Activated B cell treated with CpG ODN at 0.5 μM for 24 hours (primary cell): ENCODE measurements at regions of chr11 and their contacts with region 1.

Region 1: DNA sequence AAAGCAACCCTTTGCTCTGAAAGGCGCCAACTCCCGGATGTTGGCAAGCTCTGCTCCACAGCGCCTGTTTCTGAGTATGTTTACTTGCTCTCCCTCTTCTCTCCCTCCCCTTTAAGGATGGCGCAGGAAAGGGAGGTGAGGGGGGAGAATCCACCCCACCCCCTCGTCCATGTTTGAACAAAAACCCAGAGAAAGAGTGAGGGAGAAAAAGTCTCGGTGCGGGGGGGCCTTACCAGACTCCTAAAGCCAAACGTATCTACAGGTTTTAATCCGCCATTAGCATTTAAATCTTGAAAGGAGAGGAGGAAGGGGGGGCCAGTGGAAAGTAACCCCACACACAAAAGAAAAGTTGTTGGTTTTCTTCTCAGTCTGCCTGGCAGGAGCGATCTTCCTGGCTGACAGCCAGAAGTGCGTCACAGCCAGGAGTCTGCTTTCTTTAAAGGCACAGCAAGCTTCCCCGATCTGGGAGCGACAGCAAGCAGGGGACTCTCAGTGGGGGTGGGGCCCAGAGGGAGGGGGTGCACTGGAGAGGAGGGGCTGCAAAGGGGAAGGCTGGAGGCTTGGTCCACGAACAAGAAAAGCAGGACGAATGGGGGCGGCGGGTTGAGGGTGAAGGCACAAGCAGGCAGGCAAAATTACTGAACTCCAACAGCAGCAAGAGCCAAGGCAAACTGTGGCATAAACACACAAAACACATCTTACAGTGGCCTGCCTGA is 39.5 kb downstream of the NUMA1 start:
- DNase-seq: peak; percentile 49
- ATAC-seq: peak; percentile 48
- H3K4me3 Mint-ChIP-seq: no peak overlapping the region
- H3K27ac Mint-ChIP-seq: no peak overlapping the region
- H3K4me1 Mint-ChIP-seq: peaks cover 2% of the 10 kb centered on the region
- H3K27me3 Mint-ChIP-seq: no peaks in the 10 kb centered on the region
- CTCF ChIP-seq: no peak

Region 2: GRCh38 chr11:71500601-71501021 is 540.3 kb before region 1 on chr11:
- CTCF ChIA-PET with region 1: no interaction called
- POLR2A ChIA-PET with region 1: no interaction called
- intact Hi-C with region 1: no loop called
- DNase-seq: no peak
- ATAC-seq: no peak
- H3K4me3 Mint-ChIP-seq: no peak overlapping the region
- H3K27ac Mint-ChIP-seq: no peak overlapping the region
- H3K4me1 Mint-ChIP-seq: peaks cover 1% of the 10 kb centered on the region
- H3K27me3 Mint-ChIP-seq: no peaks in the 10 kb centered on the region
- CTCF ChIP-seq: no peak

Region 3: DNA sequence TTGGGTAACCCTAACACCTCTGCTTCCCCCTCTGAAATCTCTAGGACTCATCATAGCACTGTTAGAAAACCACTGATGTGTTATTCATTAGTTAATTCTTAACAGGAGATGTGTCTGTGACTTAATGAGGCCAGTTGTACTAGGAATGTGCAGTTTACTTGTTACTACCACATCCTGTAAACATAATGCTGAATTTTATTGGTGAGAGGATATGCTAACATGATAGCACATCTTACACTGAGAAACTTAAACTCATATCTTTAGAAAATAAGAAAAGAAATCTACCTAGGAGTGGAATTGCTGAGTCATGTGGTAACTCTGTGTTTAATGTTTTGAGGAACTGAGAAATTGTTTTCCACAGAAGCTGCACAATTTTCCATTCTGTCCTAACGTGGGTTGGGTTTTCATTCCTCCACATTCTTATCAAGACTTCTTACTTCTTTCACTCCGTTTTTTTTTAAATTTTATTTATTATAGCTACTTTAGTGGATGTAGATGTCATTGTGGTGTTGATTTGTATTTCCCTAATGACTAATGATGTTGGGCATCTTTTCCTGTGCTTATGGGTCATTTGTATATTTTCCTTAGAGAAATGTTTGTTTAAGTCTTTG is 78.4 kb before region 1 on chr11:
- CTCF ChIA-PET with region 1: no interaction called
- POLR2A ChIA-PET with region 1: no interaction called
- intact Hi-C with region 1: no loop called
- DNase-seq: no peak
- ATAC-seq: peak; percentile 77
- H3K4me3 Mint-ChIP-seq: no peak overlapping the region
- H3K27ac Mint-ChIP-seq: peak overlapping the region; percentile 75
- H3K4me1 Mint-ChIP-seq: peaks cover 19% of the 10 kb centered on the region
- H3K27me3 Mint-ChIP-seq: no peaks in the 10 kb centered on the region
- CTCF ChIP-seq: no peak

Region 4: DNA sequence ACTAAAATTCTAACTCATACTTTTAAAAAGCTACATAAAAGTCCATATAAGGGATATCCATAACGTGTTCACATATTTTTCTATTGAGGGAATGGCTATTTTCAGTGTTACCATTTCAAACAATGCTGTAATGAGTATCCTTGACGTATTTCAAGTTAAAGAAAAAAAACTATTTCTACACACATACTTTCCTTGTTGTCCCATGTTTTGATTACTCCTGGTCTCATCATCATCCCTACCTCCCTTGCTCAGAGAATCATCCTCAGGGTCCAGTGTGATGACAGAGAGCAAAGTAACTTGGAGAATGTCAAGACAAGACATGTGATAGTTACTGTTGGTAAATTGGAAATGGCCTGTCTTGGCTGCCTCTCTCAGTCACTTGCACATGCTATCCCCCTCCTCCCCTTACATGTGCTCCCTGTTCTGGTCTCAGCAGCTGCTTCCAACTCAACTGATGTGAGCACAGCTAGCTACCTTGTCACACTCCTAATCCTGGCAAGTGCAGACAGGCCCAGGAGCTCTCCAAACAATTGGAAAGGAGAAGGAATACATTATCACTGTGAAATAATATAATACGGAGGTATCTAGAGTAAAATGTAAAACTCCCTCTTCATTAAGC is 17.6 kb after region 1 on chr11:
- CTCF ChIA-PET with region 1: no interaction called
- POLR2A ChIA-PET with region 1: interaction called, 3 read pairs
- intact Hi-C with region 1: loop called (anchors 2 kb)
- DNase-seq: no peak
- ATAC-seq: no peak
- H3K4me3 Mint-ChIP-seq: no peak overlapping the region
- H3K27ac Mint-ChIP-seq: no peak overlapping the region
- H3K4me1 Mint-ChIP-seq: peaks cover 7% of the 10 kb centered on the region
- H3K27me3 Mint-ChIP-seq: no peaks in the 10 kb centered on the region
- CTCF ChIP-seq: no peak

Region 5: DNA sequence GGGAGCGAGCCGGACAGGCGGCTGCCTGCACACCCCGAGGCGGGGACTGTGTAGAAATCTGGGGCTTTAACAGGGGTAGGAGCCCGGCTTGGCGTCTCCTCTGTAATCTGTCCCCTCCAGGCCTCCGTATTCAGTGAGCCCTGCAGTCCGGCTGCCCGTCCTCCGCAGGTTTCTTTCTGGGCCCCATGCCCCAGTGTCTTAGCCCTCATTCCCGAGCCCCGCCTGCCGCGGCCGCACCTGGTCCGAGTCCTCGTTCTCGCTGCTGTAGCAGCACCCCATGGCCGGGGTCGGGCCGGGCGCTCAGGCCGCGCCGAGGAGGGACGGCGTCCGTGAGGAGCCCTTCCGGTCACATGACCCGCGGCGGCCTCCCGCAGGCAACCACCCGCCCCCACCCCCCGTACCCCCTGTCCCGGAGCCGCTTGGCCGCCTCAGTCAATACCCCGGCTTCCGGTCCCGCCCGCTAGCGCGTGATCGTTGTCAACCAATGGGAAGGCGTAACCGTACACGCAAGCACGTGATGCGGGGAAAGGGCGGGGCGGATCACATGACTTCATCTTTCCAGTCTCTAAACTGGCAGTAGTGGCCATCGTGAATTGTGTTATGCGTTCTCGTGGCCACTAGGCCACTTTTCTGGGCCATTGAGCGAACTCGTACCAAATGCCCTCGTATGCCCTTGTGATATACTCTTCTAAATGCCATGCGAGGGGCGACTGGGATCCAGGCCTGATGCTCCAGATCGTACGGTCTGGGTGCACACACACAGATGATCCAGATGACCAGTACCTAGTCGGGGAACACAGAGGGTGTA is 62.3 kb after region 1 on chr11 and contains the start of gene LAMTOR1:
- CTCF ChIA-PET with region 1: no interaction called
- POLR2A ChIA-PET with region 1: interaction called, 9 read pairs
- intact Hi-C with region 1: loop called (anchors 2 kb)
- DNase-seq: peak; percentile 93
- ATAC-seq: peak; percentile 96
- H3K4me3 Mint-ChIP-seq: peak within 1 kb of the TSS; percentile 96
- H3K27ac Mint-ChIP-seq: peak within 1 kb of the TSS; percentile 93
- H3K4me1 Mint-ChIP-seq: peaks cover 46% of the 10 kb centered on the region
- H3K27me3 Mint-ChIP-seq: no peaks in the 10 kb centered on the region
- CTCF ChIP-seq: no peak
- total RNA-seq, gene LAMTOR1: 87.2 and 87.6 TPM in 2 replicates

Region 6: GRCh38 chr11:72112321-72113219 is 71.7 kb after region 1 on chr11 and contains the start of gene ANAPC15:
- CTCF ChIA-PET with region 1: interaction called, 3 read pairs
- POLR2A ChIA-PET with region 1: interaction called, 34 read pairs
- intact Hi-C with region 1: loop called (anchors 2 kb)
- DNase-seq: peak; percentile 90
- ATAC-seq: peak; percentile 90
- H3K4me3 Mint-ChIP-seq: peak within 1 kb of the TSS; percentile 97
- H3K27ac Mint-ChIP-seq: peak within 1 kb of the TSS; percentile 100
- H3K4me1 Mint-ChIP-seq: peaks cover 25% of the 10 kb centered on the region
- H3K27me3 Mint-ChIP-seq: peaks cover 13% of the 10 kb centered on the region
- CTCF ChIP-seq: no peak
- total RNA-seq, gene ANAPC15: 44.4 and 56.3 TPM in 2 replicates

Region 7: GRCh38 chr11:72135891-72136675 is 95.2 kb after region 1 on chr11:
- CTCF ChIA-PET with region 1: no interaction called
- POLR2A ChIA-PET with region 1: no interaction called
- intact Hi-C with region 1: no loop called
- DNase-seq: no peak
- ATAC-seq: no peak
- H3K4me3 Mint-ChIP-seq: no peak overlapping the region
- H3K27ac Mint-ChIP-seq: no peak overlapping the region
- H3K4me1 Mint-ChIP-seq: no peaks in the 10 kb centered on the region
- H3K27me3 Mint-ChIP-seq: peaks cover 12% of the 10 kb centered on the region
- CTCF ChIP-seq: no peak